ENCODE measurements at regions of chr11 and their contacts with region 1.

Region 1: GRCh38 chr11:111604392-111605009 is 2.3 kb downstream of the SIK2 start:
- DNase-seq: no peak
- ATAC-seq: no peak
- H3K4me3 Mint-ChIP-seq: peak overlapping the region; percentile 86
- H3K27ac Mint-ChIP-seq: no peak overlapping the region
- H3K4me1 Mint-ChIP-seq: peaks cover 27% of the 10 kb centered on the region
- H3K27me3 Mint-ChIP-seq: peaks cover 24% of the 10 kb centered on the region
- CTCF ChIP-seq: peak; percentile 36; the same call in 1 of the 2 replicates

Region 2: DNA sequence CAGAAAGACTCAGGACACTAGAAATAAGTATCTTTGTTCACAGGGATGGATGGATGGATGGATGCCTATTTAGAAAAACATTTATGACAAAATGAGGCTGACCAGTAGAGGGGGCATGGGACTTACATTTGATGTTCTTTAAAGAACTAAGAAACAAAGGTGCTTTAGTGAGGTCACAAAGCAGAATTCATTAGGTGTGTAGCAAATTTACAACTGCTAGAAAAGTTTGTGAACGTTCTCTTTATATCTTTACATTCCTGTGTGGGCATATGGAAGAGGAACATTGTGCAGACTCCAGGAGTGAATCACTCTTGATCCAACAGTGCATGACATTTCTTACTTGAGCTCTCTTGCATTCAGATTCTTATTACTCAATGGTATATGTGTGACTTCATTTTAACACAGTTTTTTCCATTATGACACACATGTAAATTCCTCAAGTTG is 18.1 kb before region 1 on chr11:
- CTCF ChIA-PET with region 1: no interaction called
- POLR2A ChIA-PET with region 1: no interaction called
- DNase-seq: no peak
- ATAC-seq: peak; percentile 62
- H3K4me3 Mint-ChIP-seq: no peak overlapping the region
- H3K27ac Mint-ChIP-seq: no peak overlapping the region
- H3K4me1 Mint-ChIP-seq: peaks cover 12% of the 10 kb centered on the region; the same call in 1 of the 2 replicates
- H3K27me3 Mint-ChIP-seq: no peaks in the 10 kb centered on the region; the same call in none of the 2 replicates
- CTCF ChIP-seq: 0 out of 2 replicates have a peak, but pooled peaks have one; percentile 21

Region 3: DNA sequence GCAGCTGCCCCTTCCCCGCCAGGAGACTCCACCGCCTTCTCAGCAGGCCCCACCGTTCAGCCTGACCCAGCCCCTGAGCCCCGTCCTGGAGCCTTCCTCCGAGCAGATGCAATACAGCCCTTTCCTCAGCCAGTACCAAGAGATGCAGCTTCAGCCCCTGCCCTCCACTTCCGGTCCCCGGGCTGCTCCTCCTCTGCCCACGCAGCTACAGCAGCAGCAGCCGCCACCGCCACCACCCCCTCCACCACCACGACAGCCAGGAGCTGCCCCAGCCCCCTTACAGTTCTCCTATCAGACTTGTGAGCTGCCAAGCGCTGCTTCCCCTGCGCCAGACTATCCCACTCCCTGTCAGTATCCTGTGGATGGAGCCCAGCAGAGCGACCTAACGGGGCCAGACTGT is 119.1 kb after region 1 on chr11:
- CTCF ChIA-PET with region 1: interaction called, 11 read pairs
- POLR2A ChIA-PET with region 1: no interaction called
- DNase-seq: no peak
- ATAC-seq: peak; percentile 81
- H3K4me3 Mint-ChIP-seq: no peak overlapping the region
- H3K27ac Mint-ChIP-seq: peak overlapping the region; percentile 78; the same call in 1 of the 2 replicates
- H3K4me1 Mint-ChIP-seq: peaks cover 24% of the 10 kb centered on the region
- H3K27me3 Mint-ChIP-seq: no peaks in the 10 kb centered on the region
- CTCF ChIP-seq: no peak

Region 4: GRCh38 chr11:111766093-111766833 is 161.8 kb after region 1 on chr11 and contains the start of gene PPP2R1B:
- CTCF ChIA-PET with region 1: interaction called, 15 read pairs
- POLR2A ChIA-PET with region 1: interaction called, 3 read pairs
- DNase-seq: peak; percentile 74
- ATAC-seq: peak; percentile 90
- H3K4me3 Mint-ChIP-seq: peak within 1 kb of the TSS; percentile 87
- H3K27ac Mint-ChIP-seq: peak within 1 kb of the TSS; percentile 98
- H3K4me1 Mint-ChIP-seq: peaks cover 45% of the 10 kb centered on the region
- H3K27me3 Mint-ChIP-seq: no peaks in the 10 kb centered on the region
- CTCF ChIP-seq: no peak
- total RNA-seq, gene PPP2R1B: 74.5 to 87.7 TPM (median 75.2 TPM) in 3 replicates

Measured in WTC11 (cell line).